Motor neuron (in vitro differentiated cells): ENCODE measurements at regions of chr9 and their contacts with region 1.

Region 1: DNA sequence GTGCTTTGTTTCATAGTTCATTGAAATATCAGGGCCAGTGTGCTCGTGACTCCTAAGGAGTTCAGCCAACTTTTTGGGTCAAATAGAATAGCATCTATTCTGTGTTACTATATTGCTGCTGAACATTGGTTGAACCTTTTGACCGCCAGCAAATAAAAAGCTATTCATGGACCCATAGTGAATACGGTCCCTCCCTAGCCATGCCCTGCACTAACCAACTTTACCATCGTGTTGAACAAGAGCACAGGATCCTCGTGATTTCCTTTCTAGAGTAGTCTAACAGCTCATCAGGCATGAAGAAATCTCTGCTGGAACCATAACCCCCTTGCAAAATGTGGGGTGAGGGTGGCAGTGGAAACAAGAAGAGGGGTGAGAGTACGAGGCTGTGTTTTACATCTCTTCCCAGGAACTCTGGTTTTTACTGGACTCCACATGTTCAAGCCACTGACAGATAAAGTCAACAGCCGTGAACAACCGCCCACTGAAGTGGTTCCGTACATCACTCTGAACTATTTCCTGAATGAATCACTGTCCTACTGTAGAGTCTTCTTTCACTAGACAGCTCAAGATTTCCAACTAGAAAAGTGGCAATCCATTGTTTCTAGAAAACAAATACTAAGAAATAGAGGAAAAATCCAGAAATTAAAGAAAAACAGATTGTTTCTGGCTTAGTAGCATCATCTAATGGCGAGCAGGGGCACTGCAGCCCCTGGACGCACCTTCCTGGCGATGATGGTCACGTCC is 70.1 kb upstream of the SPATA31E1 start:
- ATAC-seq: peak in 3 of 8 experiments; percentile 79 to 83 (median 81)
- H3K4me3 ChIP-seq: no peak overlapping the region
- H3K27ac ChIP-seq: no peak overlapping the region
- H3K4me1 ChIP-seq: no peaks in the 10 kb centered on the region

Region 2: DNA sequence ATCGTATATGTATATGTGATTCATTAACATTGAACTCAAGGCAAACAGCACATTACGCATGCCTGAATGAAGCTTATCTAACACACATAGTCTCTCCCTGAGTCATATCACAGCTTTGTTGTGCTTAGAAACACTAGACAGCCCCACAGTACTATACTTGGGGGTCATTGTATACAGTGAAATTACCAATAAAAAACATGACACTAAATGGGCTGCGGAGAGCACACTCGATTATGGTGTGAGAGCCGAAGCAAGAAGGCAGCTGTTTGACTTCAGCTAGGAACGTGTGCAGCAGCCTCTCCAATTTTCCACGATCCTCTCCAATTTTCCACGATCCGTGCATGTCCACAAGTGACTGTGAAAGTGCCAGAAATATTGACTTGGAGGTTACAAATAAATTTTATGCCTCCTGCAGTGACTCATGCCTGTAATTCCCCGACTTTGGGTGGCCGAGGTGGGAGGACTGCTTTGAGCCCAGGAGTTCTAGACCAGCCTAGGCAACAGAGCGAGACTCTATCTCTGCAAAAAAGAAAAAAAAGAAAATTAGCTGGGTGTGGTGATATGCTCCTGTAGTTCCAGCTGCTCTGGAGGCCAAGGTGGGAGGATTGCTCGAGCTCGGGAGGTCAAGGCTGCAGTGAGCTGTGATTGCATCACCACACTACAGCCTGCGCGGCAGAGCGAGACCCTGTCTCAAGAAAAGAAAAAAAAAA is 212.5 kb before region 1 on chr9:
- in situ Hi-C with region 1: no loop called
- ATAC-seq: peak; percentile 58 to 90 (median 80)
- H3K4me3 ChIP-seq: no peak overlapping the region
- H3K27ac ChIP-seq: no peak overlapping the region
- H3K4me1 ChIP-seq: peaks cover 4 to 13% of the 10 kb centered on the region in 2 donors

Region 3: GRCh38 chr9:87678650-87679515 is 133.7 kb before region 1 on chr9:
- in situ Hi-C with region 1: loop called in 2 of 9 experiments (anchors 25 kb)
- ATAC-seq: peak; percentile 52 to 75 (median 72)
- H3K4me3 ChIP-seq: no peak overlapping the region
- H3K27ac ChIP-seq: no peak overlapping the region
- H3K4me1 ChIP-seq: peaks cover 3 to 6% of the 10 kb centered on the region in 2 donors

Region 4: DNA sequence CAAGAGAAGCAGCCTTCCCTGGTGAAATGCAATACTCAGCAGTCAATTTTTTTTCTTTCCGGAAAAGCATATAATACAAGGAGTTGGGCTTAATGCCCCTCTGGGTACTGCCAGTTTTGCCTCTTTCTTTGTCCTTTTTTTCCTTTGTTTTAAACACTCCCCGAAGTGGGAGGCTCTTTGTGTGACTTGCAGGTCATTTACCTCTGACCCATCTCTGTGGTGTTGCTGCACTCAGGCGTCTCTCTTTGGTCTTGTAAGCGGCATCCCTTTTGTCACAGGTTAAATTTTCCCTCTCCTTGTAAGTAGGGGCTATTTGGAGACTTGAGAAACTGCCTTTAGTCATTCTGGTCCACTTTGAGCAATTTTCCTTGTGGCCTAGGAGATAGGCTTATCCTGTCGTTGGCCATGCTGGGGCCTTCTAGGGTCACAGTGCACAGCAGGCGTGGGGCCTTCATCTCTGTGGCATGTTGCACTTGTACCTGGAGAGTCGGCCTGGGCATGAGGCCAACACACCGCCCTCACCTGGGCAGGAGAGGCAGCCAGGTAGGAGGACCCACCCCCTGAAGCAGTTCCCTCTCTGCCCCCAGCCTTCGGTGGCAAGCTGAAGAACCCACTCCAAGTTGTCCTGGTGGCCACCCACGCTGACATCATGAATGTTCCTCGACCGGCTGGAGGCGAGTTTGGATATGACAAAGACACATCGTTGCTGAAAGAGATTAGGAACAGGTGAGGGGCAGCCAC is 114.3 kb before region 1 on chr9:
- in situ Hi-C with region 1: loop called in 3 of 9 experiments (anchors 10 to 25 kb)
- ATAC-seq: no peak
- H3K4me3 ChIP-seq: no peak overlapping the region
- H3K27ac ChIP-seq: no peak overlapping the region
- H3K4me1 ChIP-seq: no peaks in the 10 kb centered on the region